Mammary epithelial cell (primary cell): ENCODE measurements at regions of chr1 and their contacts with region 1.

Region 1: DNA sequence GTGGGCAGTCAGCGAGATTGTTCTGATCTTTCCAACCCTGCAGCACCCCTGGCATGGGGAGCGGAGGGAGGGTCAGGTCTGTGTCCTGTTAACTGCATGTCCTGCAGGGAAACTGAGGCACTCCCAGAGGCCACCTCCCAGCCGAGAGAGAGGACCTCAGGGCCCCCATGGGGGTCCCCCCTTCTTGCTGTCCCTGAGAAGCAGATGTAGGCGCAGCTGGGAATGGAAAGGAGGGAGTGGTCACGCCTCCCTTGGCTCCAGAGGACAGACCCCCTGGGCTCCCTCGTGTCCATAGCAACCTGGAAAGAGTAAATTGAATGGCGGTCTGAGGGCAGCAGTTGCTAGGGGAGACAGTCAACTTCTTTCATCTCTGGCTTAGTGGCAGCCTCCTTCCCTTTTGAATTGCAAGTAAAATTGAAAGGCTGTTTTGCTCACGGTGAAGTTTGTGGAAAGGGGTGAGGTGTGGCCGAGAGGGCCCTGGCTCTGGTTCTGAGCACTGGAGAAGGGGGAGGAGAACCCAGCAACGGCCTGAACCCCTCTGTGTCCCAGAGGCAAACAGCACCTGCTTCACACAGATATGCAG is 4.9 kb downstream of the CROCC start:
- DNase-seq: no peak
- H3K4me3 ChIP-seq: no peak overlapping the region
- H3K27ac ChIP-seq: no peak overlapping the region
- H3K4me1 ChIP-seq: peaks cover 39% of the 10 kb centered on the region
- H3K27me3 ChIP-seq: no peaks in the 10 kb centered on the region
- CTCF ChIP-seq: no peak

Region 2: DNA sequence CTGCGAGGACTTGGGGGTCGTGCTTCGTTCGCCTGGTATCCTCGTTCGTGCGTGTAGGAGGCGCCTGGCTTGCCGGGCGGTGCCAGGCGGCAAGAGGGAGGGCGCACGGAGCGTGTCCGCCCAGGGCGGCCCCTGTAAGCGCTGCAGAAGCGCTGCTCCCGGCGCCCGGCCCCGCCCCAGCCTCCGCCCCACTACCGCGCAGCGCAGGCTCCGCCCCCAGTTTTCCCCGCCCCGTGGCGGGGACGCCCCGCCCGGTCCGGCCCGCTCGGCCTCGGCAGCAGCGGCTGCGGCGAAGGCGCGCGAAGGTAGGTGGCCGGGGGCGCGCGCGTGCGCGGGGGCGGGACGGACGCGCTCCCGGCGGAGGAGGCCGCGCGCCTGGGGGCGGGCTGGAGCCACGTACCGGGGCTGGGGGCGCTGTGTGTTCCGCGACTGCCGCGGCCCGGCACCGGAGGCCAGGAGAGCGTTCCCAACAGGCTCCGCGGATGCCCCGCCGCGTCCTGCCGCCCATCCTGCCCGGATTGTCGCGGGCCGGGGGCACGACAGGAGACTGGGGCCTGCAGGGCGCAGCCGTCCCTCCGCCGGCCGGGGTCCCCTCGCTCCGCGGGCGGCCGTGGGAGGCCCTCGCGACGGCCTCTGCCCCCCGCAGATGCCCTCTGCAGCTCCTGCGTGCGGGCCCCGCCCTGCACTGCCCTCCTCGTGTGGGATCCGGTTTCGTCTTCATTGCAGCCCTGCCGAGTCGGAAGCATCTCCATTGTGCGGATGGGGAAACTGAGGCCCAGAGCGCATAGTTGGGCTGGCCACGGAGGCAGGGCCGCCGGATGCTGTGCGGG is 12.5 kb before region 1 on chr1:
- CTCF ChIA-PET with region 1: no interaction called
- dilution Hi-C with region 1: no loop called
- in situ Hi-C with region 1: no loop called
- intact Hi-C with region 1: loop called (anchors 1 kb)
- DNase-seq: peak; percentile 90
- H3K4me3 ChIP-seq: peak overlapping the region; percentile 28 to 78 (median 71)
- H3K27ac ChIP-seq: peak overlapping the region; percentile 22
- H3K4me1 ChIP-seq: peaks cover 9% of the 10 kb centered on the region
- H3K27me3 ChIP-seq: no peaks in the 10 kb centered on the region
- CTCF ChIP-seq: no peak

Region 3: DNA sequence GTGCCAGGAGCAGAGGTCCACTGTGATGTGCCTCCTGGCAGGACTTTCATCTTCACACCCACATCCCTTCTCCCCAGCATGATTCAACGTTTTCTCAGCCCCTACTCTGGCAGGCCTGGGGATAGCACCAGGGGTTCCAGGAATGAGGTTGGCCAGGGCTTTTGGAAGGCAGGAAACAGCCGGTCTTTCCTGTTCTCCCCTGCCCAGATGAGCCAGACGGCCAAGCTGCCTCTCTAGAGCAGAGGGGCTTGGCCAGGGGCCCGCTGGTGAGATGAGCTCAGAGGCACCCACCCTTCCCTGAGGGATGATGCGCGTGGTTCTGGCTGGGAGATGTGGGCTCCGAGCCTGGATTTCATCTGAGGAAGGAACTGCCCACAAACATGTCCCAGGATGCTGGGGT is 58.1 kb after region 1 on chr1:
- CTCF ChIA-PET with region 1: no interaction called
- dilution Hi-C with region 1: no loop called
- in situ Hi-C with region 1: no loop called
- intact Hi-C with region 1: loop called (anchors 5 kb)
- DNase-seq: peak; percentile 92
- H3K4me3 ChIP-seq: no peak overlapping the region
- H3K27ac ChIP-seq: peak overlapping the region; percentile 26
- H3K4me1 ChIP-seq: peaks cover 46% of the 10 kb centered on the region
- H3K27me3 ChIP-seq: no peaks in the 10 kb centered on the region
- CTCF ChIP-seq: no peak

Region 4: GRCh38 chr1:17011439-17012307 is 85.1 kb after region 1 on chr1 and contains the start of gene ATP13A2:
- CTCF ChIA-PET with region 1: no interaction called
- dilution Hi-C with region 1: no loop called
- in situ Hi-C with region 1: no loop called
- intact Hi-C with region 1: no loop called
- DNase-seq: peak; percentile 81
- H3K4me3 ChIP-seq: peak within 1 kb of the TSS; percentile 61 to 82 (median 81)
- H3K27ac ChIP-seq: no peak within 1 kb of the TSS
- H3K4me1 ChIP-seq: peaks cover 43% of the 10 kb centered on the region
- H3K27me3 ChIP-seq: no peaks in the 10 kb centered on the region
- CTCF ChIP-seq: no peak
- total RNA-seq, gene ATP13A2: 97.1 to 180 TPM